Prostate gland (tissue), 2 donors: ENCODE measurements at regions of chr6 and their contacts with region 1.

Region 1: GRCh38 chr6:3913077-3913957 is 64.1 kb downstream of the FAM50B start:
- DNase-seq: peak; percentile 90
- H3K4me3 ChIP-seq: no peak overlapping the region
- H3K27ac ChIP-seq: peak overlapping the region; percentile 80
- H3K4me1 ChIP-seq: peaks cover 4% of the 10 kb centered on the region
- H3K27me3 ChIP-seq: no peaks in the 10 kb centered on the region
- CTCF ChIP-seq: no peak
- POLR2A ChIP-seq: no peak

Region 2: GRCh38 chr6:3825851-3826581 is 87.3 kb before region 1 on chr6:
- intact Hi-C with region 1: loop called (anchors 5 kb)
- DNase-seq: peak; percentile 94
- H3K4me3 ChIP-seq: peak overlapping the region in 1 of 2 donors; percentile 13
- H3K27ac ChIP-seq: peak overlapping the region; percentile 91 to 93
- H3K4me1 ChIP-seq: peaks cover 5% of the 10 kb centered on the region
- H3K27me3 ChIP-seq: no peaks in the 10 kb centered on the region
- CTCF ChIP-seq: no peak
- POLR2A ChIP-seq: no peak

Region 3: DNA sequence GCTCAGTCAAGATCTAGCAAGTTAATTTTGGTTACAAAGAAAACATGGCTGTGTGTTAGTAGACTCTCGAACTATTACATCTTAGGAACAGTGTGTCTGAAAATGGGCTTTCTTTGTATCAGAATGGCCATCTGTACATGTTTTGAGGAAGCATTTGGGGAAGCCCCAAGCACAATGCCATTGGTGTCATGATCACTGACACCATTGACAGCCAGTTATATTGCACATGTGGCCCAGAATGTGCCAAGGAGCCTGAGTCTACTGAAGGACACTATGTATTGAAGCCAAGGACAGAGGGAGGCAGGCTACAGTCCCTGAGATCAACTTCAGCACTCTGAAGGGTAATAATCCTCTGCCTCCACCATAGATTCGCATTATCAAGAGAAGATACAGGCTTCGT is 76.8 kb before region 1 on chr6:
- intact Hi-C with region 1: no loop called
- DNase-seq: no peak
- H3K4me3 ChIP-seq: no peak overlapping the region
- H3K27ac ChIP-seq: no peak overlapping the region
- H3K4me1 ChIP-seq: no peaks in the 10 kb centered on the region
- H3K27me3 ChIP-seq: no peaks in the 10 kb centered on the region
- CTCF ChIP-seq: no peak
- POLR2A ChIP-seq: no peak

Region 4: GRCh38 chr6:3848925-3849605 is 64.3 kb before region 1 on chr6 and contains the start of gene FAM50B:
- intact Hi-C with region 1: no loop called
- DNase-seq: peak; percentile 90
- H3K4me3 ChIP-seq: peak within 1 kb of the TSS; percentile 31 to 38
- H3K27ac ChIP-seq: peak within 1 kb of the TSS; percentile 47 to 64
- H3K4me1 ChIP-seq: no peaks in the 10 kb centered on the region
- H3K27me3 ChIP-seq: no peaks in the 10 kb centered on the region
- CTCF ChIP-seq: peak; percentile 93 to 98 (median 96)
- POLR2A ChIP-seq: peak; percentile 48
- total RNA-seq, gene FAM50B: 14.2 to 36.4 TPM

Region 5: DNA sequence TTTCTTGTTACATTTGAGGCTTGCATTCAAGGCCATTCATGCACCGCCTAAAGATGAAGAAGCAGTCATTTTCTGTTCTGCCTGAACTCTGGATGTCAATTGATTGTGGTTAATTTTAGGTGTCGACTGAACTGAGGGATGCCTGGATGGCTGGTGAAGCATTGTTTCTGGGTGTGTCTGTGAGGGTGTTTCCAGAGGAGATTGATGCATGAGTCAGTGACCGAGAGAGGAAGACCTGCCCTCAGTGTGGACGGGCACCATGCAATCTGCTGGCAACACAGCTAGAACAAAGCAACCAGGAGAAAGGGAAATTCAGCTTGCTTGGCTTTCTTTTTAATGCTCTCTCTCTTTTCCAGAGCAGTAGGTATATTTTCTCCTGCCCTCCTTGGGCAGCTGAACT is 386.2 kb after region 1 on chr6:
- intact Hi-C with region 1: no loop called
- DNase-seq: no peak
- H3K4me3 ChIP-seq: no peak overlapping the region
- H3K27ac ChIP-seq: no peak overlapping the region
- H3K4me1 ChIP-seq: no peaks in the 10 kb centered on the region
- H3K27me3 ChIP-seq: no peaks in the 10 kb centered on the region
- CTCF ChIP-seq: no peak
- POLR2A ChIP-seq: no peak